PC-9 (cell line): ENCODE measurements at regions of chr1 and their contacts with region 1.

Region 1: DNA sequence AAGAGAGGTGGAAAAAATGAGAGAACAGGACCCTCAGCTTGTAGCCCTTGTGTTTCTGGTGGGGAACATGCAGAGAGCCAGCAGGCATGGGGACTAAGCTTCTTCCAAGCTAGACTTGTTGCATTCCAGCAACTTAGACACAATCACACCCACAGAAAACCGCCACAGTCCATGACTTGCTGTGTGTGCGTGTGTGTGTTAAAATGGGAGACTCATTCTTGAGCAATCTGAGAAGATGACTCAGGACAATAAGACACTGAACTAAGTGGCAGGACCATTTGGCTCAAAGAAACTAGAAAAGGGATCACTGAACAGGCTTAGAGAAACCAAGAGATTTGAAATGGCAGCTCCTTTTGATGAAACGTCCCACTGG is 78.0 kb downstream of the HLX start:
- DNase-seq: no peak
- H3K4me3 ChIP-seq: no peak overlapping the region
- H3K27ac ChIP-seq: no peak overlapping the region
- H3K4me1 ChIP-seq: peaks cover 18% of the 10 kb centered on the region
- H3K27me3 ChIP-seq: no peaks in the 10 kb centered on the region
- CTCF ChIP-seq: no peak

Region 2: DNA sequence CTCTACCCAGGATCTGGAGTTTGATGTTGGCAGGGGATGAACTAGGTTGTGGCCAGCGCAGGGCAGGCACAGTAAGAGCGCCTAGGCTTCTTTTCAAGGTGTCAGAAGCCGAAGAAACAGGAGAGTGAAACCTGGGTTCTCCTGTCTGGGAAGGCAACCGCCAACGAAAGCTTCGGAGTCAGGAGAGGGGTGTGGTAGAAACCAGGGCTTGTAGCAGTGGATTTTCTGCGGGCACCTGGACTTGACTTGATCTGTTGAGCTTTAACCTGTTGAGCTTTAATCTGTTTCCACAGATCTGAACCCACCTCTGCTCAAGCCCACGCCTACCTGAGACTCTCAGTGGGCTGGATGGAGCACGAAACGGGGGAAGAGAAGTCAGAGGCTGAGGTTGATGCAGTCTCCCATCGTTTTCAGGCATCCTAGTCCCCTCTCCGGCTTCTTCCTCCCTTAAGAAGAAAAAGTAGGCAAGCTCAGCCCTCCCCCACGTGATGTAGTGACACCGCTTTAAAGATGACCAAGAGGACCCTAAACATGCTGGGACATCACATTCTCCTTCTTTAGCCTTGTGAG is 68.7 kb before region 1 on chr1:
- CTCF ChIA-PET with region 1: interaction called, 13 read pairs
- POLR2A ChIA-PET with region 1: no interaction called
- intact Hi-C with region 1: no loop called
- DNase-seq: no peak
- H3K4me3 ChIP-seq: no peak overlapping the region
- H3K27ac ChIP-seq: no peak overlapping the region
- H3K4me1 ChIP-seq: no peaks in the 10 kb centered on the region
- H3K27me3 ChIP-seq: peaks cover 15% of the 10 kb centered on the region
- CTCF ChIP-seq: no peak

Region 3: GRCh38 chr1:221032637-221033280 is 75.5 kb after region 1 on chr1:
- CTCF ChIA-PET with region 1: no interaction called
- POLR2A ChIA-PET with region 1: no interaction called
- intact Hi-C with region 1: no loop called
- DNase-seq: no peak
- H3K4me3 ChIP-seq: no peak overlapping the region
- H3K27ac ChIP-seq: no peak overlapping the region
- H3K4me1 ChIP-seq: peaks cover 14% of the 10 kb centered on the region
- H3K27me3 ChIP-seq: no peaks in the 10 kb centered on the region
- CTCF ChIP-seq: no peak